Sigmoid colon (tissue), 7 donors: ENCODE measurements at regions of chr2 and their contacts with region 1.

Region 1: DNA sequence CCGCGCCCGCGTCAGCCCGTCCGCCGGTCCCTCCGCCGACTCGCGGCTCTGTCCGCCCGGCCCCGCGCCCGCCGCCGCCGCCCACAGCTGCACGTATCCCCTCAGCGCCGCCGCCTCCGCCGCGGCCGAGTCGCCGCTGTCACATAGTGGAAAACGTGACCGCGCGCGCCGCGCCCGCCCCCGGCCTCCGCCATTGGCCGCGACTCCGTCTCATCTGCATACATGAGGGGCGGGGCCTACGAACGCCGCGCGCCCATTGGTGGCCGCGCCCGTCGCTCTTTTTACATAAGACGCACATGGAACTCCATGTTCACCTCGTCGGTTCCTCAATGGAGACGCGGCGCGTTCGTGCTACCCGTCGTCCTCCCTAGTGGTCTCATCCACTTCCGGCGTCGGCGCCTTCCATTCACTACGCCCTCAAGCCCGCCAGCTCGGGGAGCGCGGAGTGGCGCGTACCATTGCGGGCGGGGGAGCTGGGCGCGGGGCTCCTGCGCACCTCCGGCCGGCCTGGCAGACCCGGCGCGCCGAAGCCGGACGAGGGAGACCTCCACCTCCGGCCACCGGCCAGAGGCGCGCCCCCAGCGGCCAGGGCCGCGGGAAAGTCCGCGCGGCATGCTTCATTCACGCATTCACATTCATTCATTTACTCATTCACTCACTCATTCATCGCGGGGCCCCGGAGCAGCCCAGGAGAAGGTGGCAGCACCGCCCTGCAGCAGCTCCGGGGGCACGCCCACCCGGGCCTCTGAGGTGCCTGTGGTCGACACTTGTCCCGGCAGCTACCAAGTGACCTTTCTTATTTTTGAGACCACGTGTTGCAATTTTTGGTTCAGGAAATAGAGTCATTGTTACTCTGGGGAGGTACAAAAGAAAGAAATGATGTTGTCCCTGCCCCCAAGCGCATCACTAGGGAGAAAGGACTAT is 502 bp upstream of the PER2 start:
- DNase-seq: peak; percentile 99
- H3K4me3 ChIP-seq: peak overlapping the region; percentile 77 to 86 (median 84)
- H3K27ac ChIP-seq: peak overlapping the region; percentile 93 to 97 (median 94)
- H3K4me1 ChIP-seq: peaks cover 0 to 50% (median 47%) of the 10 kb centered on the region in 4 donors
- H3K27me3 ChIP-seq: no peaks in the 10 kb centered on the region
- CTCF ChIP-seq: peak in 1 of 4 experiments; percentile 26
- EP300 ChIP-seq: peak in 1 of 4 donors; percentile 55
- POLR2A ChIP-seq: peak; percentile 26 to 50

Region 2: DNA sequence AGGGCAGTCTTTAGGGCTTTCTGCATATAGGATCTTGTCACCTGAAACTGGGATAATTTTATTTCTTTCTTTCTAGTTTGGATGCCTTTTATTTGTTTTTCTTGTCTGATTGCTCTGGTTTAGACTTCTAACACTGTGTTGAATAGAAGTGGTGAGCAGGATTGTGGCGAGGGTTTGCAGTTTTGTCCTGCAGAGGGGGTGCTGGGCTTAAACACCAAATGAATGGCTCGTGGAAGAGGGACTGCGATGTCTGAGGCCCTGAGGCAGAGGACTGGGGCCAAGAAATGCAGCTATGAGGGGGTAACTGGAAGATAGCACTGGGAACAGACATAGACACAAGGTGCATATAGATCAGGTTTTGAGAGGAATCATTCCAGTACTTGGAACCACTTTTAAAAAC is 301.6 kb before region 1 on chr2:
- intact Hi-C with region 1: no loop called
- DNase-seq: no peak
- H3K4me3 ChIP-seq: no peak overlapping the region
- H3K27ac ChIP-seq: no peak overlapping the region
- H3K4me1 ChIP-seq: peaks cover 0 to 10% (median 5%) of the 10 kb centered on the region in 4 donors
- H3K27me3 ChIP-seq: no peaks in the 10 kb centered on the region
- CTCF ChIP-seq: no peak
- EP300 ChIP-seq: no peak
- POLR2A ChIP-seq: no peak

Region 3: DNA sequence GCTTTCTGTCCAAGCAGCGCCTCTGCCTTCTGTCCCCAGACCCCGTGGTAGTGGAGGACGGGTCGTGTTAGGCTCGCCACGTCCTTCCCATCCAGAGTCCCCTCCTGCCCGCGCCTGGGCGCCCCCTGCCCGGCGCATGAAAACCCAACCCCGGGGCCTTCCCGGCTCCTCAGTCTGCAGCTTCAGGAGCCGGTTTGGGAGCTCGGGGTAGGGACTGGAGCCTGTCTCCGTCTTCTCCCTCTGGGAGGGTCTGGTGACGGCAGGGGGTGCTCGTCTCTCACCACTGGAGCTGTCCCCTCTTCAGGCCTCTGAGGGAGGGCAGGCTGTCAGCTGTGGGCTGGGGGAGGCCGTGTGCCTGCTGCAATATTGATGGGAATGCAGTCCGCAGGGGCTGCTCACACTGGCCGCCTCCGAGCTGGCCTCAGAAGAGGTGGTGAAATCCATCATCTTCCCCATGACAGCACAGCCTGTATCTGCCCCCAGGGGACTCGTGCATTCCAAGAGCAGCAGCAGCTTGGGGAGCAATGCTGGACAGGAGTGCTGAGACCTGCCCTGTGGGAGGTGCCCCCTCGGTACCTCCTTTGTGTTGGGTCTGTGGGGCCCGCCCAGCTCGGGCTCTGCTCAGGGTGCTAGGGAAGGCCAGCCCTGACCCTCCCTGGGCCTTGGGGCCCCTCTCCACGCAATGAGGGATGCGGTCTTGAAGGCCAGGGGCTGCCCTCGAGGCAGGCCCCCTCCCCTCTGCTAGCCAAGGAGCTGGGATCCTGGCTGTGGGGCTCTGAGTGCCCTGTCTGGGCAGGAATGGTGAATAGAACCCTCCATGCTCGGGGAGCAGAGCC is 168.2 kb before region 1 on chr2:
- intact Hi-C with region 1: no loop called
- DNase-seq: no peak
- H3K4me3 ChIP-seq: no peak overlapping the region
- H3K27ac ChIP-seq: no peak overlapping the region
- H3K4me1 ChIP-seq: no peaks in the 10 kb centered on the region
- H3K27me3 ChIP-seq: peaks cover 0 to 4% (median 4%) of the 10 kb centered on the region in 3 donors
- CTCF ChIP-seq: no peak
- EP300 ChIP-seq: no peak
- POLR2A ChIP-seq: no peak

Region 4: GRCh38 chr2:238152771-238153688 is 135.9 kb before region 1 on chr2:
- intact Hi-C with region 1: no loop called
- DNase-seq: no peak
- H3K4me3 ChIP-seq: no peak overlapping the region
- H3K27ac ChIP-seq: no peak overlapping the region
- H3K4me1 ChIP-seq: no peaks in the 10 kb centered on the region
- H3K27me3 ChIP-seq: peaks cover 0 to 2% (median 0%) of the 10 kb centered on the region in 3 donors
- CTCF ChIP-seq: no peak
- EP300 ChIP-seq: no peak
- POLR2A ChIP-seq: no peak

Region 5: DNA sequence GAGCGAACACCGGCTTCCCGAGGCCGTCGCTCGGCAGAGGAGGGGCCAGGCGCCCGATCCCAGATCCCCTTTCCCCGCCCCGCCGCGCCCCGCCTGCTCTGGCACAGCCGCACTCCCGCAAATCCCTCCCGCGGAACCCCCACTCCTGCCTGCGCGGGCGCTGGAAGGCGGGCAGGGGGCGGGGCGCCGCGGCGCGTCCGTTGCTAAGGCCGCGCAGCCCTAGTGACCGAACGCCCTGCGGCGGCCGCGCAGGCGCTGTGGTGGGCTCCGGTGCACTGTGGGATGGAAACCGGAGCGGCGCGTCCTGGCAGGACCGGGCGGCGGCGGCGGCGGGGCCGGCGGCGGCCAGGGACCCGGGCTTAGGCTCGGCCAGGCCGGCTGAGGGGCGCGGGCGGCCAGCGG is 31.3 kb after region 1 on chr2 and contains the start of gene TRAF3IP1:
- intact Hi-C with region 1: loop called (anchors 2 kb)
- DNase-seq: peak; percentile 97
- H3K4me3 ChIP-seq: peak within 1 kb of the TSS; percentile 61 to 94 (median 94)
- H3K27ac ChIP-seq: peak within 1 kb of the TSS; percentile 68 to 81 (median 76)
- H3K4me1 ChIP-seq: peaks cover 0 to 25% (median 21%) of the 10 kb centered on the region in 4 donors
- H3K27me3 ChIP-seq: no peaks in the 10 kb centered on the region
- CTCF ChIP-seq: no peak
- EP300 ChIP-seq: no peak
- POLR2A ChIP-seq: no peak
- total RNA-seq, gene TRAF3IP1: 17.5 to 20.8 (median 18.2) TPM

Region 6: GRCh38 chr2:238379096-238379810 is 90.3 kb after region 1 on chr2:
- intact Hi-C with region 1: no loop called
- DNase-seq: no peak
- H3K4me3 ChIP-seq: no peak overlapping the region
- H3K27ac ChIP-seq: no peak overlapping the region
- H3K4me1 ChIP-seq: peaks cover 0 to 17% (median 6%) of the 10 kb centered on the region in 4 donors
- H3K27me3 ChIP-seq: no peaks in the 10 kb centered on the region
- CTCF ChIP-seq: no peak
- EP300 ChIP-seq: no peak
- POLR2A ChIP-seq: no peak

Region 7: DNA sequence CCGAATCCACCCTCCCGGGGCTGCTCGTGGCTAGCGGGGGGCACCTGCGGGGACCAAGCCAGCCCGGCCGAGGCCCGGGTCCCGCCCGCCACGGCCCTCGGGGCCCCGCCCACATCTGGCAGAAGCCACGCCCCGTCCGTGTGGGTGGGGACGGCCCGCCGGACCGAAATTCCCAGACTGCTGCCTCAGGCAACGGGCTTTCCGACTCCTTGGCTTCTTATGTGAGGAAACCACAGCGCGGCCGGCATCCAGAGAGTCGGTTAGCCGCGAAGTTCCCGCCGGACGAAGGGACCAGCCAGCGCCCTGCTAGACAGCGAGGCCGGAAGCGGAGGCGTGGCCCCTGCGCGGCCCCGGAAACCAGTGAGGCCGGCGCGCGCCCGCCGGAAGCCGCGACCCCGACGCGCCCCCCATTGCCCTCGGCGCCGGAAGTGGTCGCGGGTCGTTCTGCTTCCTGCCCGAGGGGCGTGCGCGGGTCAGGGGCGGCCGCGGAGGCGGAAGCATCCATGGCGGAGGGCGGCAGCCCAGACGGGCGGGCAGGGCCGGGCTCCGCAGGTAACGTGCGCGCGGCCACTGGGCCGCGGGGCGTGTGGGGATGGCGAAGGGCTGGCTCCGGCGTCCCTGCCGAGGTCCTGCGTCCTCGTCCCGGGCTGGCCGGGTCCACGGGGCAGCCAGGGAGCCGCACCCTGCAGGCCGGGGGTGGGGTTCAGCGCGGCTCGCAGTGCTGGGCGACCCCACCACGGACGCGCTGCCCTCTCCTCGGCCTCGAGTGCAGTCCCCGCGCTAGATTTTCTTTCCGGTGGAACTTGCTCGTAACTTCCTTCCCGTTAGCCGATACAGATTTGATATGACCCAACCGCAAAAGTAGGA is 137.9 kb after region 1 on chr2 and contains the start of gene ASB1:
- intact Hi-C with region 1: loop called (anchors 5 kb)
- DNase-seq: peak; percentile 87
- H3K4me3 ChIP-seq: peak within 1 kb of the TSS; percentile 67 to 90 (median 82)
- H3K27ac ChIP-seq: peak within 1 kb of the TSS; percentile 84 to 91 (median 88)
- H3K4me1 ChIP-seq: peaks cover 0 to 30% (median 26%) of the 10 kb centered on the region in 4 donors
- H3K27me3 ChIP-seq: no peaks in the 10 kb centered on the region
- CTCF ChIP-seq: no peak
- EP300 ChIP-seq: no peak
- POLR2A ChIP-seq: no peak
- total RNA-seq, gene ASB1: 13.6 to 36.0 (median 15.3) TPM